H1 (cell line): ENCODE measurements at regions of chr7 and their contacts with region 1.

Region 1: GRCh38 chr7:155778349-155778748 is 33.9 kb downstream of the SHH start:
- DNase-seq: no peak
- H3K4me3 ChIP-seq: no peak overlapping the region
- H3K27ac ChIP-seq: no peak overlapping the region
- H3K4me1 ChIP-seq: peaks cover 0 to 3% (median under 1%) of the 10 kb centered on the region in 4 experiments; a peak in 1 of 7 replicates
- H3K27me3 ChIP-seq: no peaks in the 10 kb centered on the region
- CTCF ChIP-seq: no peak
- EP300 ChIP-seq: no peak
- POLR2A ChIP-seq: no peak
- RAD21 ChIP-seq: no peak

Region 2: DNA sequence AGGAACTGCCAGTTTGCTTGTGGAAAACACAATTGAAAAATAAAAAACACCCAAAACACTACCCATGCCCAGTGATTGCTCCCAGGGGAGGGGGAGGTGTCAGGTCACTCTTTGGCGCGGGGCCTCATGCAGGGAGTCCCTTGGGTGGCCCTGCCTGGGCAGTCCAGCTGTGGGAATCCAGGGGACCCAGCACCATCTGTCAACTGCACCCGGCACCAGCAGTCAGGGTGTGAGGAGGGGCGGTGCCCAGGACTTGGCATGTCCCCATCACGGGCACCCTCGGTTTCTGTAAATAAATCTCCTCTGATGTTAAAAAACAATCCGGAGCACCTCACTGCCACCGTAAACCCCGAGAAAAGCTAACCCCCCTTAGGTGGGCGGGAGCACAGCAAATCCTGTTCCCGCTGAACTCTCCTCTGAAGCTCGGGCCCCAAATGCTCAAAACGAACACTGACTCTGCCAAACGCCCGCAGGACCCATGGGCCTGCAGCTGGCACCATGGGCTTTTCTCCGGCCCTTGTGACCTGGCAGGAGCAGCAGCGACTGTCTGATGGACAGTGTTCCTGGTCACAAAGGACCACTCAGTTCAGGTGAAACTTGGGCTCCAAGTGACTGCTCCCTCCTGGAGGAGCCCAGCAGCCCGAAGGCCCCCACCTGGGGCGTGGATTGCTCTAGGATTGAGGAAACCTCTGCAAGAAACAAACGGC is 338.9 kb before region 1 on chr7:
- CTCF ChIA-PET with region 1: no interaction called
- POLR2A ChIA-PET with region 1: no interaction called
- DNase-seq: no peak
- H3K4me3 ChIP-seq: no peak overlapping the region
- H3K27ac ChIP-seq: no peak overlapping the region
- H3K4me1 ChIP-seq: no peaks in the 10 kb centered on the region
- H3K27me3 ChIP-seq: peaks cover 0 to 4% (median 3%) of the 10 kb centered on the region in 4 experiments; a peak in 4 of 7 replicates
- CTCF ChIP-seq: no peak
- EP300 ChIP-seq: no peak
- POLR2A ChIP-seq: no peak
- RAD21 ChIP-seq: no peak

Region 3: GRCh38 chr7:155766966-155767916 is 11.1 kb before region 1 on chr7:
- CTCF ChIA-PET with region 1: interaction called, 12 read pairs
- POLR2A ChIA-PET with region 1: no interaction called
- DNase-seq: no peak
- H3K4me3 ChIP-seq: no peak overlapping the region
- H3K27ac ChIP-seq: no peak overlapping the region
- H3K4me1 ChIP-seq: peaks cover 0 to 2% (median 0%) of the 10 kb centered on the region in 4 experiments; a peak in 2 of 7 replicates
- H3K27me3 ChIP-seq: no peaks in the 10 kb centered on the region
- CTCF ChIP-seq: no peak
- EP300 ChIP-seq: no peak
- POLR2A ChIP-seq: no peak
- RAD21 ChIP-seq: no peak